ENCODE measurements at regions of chr3 and their contacts with region 1.

Region 1: DNA sequence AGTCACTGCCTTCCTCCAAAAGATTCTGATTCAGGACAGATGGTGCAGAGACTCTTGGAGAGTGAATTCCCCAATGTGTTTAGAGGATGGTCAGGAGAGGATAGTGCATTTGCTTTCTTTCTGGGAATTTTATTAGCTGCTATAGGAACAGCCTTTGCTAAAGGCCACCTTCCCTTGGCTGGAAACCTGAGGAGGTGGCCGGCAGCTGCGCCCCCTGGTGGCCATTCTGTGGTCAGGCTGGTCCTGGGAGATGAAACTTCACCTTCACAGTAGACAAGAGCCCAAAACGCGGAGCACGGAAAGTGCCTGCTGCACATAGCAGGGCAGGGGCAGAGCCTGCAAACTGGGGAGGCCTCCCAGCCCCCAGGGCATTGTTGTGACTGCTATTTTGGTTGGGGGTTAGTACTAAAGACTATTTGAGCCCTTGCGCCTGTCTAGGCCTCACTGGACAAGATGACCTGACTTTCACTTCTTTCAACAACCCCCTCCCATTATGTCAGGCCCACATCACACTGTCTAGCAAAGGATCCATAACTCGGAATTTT is 34.3 kb downstream of the SEC22C start:
- DNase-seq: peak; percentile 67
- H3K4me3 Mint-ChIP-seq: no peak overlapping the region
- H3K27ac Mint-ChIP-seq: no peak overlapping the region
- H3K4me1 Mint-ChIP-seq: peaks cover 3% of the 10 kb centered on the region
- H3K27me3 Mint-ChIP-seq: no peaks in the 10 kb centered on the region

Region 2: DNA sequence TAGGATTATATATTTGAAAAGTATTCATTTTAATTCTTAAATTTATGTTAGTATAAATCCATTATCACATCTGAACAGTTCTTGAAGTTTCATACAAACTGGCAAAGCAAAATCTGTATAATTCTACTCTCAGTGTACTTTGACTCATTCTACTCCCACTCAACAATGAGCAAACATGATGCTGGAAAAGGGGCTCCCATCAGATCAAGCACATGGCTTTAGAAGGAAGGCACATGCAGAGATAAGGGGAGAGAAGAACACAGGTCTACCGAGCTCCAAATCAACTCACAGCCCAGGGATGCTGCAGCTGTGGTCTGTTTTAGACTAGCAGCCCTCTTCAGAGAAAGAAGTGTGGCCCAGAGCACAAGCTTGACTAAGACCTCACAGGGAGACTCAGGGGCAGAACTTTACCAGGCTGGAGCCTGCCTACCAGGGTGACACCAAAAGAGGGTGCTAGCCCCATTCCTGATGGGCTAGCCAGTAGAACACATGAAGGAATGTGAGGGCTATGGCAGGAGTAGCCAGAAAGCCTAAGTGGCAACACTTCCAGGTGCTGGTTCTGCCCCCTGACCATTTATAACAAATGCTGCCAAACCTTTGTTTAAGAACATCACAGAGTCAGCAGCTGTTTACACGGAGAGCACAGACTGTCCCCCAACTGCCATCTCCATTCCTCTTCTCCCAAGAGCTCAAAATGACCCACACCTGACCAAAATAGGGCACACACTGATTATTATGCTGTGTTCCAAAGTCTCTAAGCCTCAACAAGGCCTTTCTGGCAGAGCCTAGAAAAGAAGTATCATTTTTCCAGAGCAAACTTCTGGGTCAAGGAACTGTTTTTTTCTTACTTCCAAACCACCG is 14.8 kb after region 1 on chr3:
- CTCF ChIA-PET with region 1: interaction called, 10 read pairs
- intact Hi-C with region 1: no loop called
- DNase-seq: no peak
- H3K4me3 Mint-ChIP-seq: no peak overlapping the region
- H3K27ac Mint-ChIP-seq: peak overlapping the region; percentile 8
- H3K4me1 Mint-ChIP-seq: peaks cover 18% of the 10 kb centered on the region
- H3K27me3 Mint-ChIP-seq: no peaks in the 10 kb centered on the region

Region 3: DNA sequence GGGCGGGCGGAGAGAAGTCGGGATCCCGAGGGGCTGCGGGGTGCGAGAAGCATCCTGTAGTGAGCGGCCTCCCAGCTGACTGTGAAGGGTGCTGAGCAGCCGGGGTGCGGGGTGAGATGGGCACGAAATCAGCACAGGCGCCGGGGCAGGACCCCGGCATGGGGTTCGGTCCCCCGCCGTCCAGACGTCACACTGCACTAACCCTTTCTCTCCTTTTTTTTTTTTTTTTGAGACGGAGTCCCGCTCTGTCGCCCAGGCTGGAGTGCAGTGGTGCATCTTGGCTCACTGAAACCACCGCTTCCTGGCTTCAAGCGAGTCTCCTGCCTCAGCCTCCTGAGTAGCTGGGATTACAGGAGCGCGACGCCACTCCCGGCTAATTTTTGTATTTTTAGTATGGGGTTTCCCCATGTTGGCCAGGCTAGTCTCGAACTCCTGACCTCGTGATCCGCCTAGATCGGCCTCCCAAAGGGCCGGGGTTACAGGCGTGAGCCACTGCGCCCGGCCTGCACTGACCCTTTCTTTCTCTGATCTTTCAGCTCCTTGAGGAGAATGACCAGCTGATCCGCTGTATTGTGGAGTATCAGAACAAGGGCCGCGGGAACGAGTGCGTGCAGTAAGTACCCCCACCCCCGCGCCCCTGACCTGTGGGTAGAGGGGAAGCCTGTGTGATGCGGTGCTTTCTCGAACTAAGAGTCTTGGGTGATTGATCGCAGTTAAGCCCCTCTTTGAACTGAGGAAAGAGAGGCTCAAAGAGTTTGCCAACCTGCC is 43.7 kb after region 1 on chr3:
- CTCF ChIA-PET with region 1: no interaction called
- intact Hi-C with region 1: no loop called
- DNase-seq: no peak
- H3K4me3 Mint-ChIP-seq: peak overlapping the region; percentile 96
- H3K27ac Mint-ChIP-seq: peak overlapping the region; percentile 84
- H3K4me1 Mint-ChIP-seq: peaks cover 35% of the 10 kb centered on the region
- H3K27me3 Mint-ChIP-seq: no peaks in the 10 kb centered on the region

Region 4: DNA sequence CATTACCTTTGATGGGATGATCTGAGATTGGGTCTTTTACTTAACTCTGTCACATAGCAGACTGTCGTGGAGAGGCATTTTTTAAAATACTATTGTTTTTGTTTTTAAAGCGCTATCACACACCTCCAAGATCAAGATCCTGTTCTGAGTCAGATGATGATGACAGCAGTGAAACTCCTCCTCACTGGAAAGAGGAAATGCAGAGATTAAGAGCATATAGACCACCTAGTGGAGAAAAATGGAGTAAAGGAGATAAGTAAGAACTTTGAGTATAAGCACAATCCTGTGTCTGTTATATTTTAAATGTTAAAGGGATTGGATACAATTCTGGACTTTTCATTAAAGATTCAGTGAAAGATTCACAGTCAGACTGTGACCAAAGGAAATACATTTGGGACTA is 87.6 kb after region 1 on chr3:
- CTCF ChIA-PET with region 1: no interaction called
- intact Hi-C with region 1: no loop called
- DNase-seq: no peak
- H3K4me3 Mint-ChIP-seq: no peak overlapping the region
- H3K27ac Mint-ChIP-seq: peak overlapping the region; percentile 67
- H3K4me1 Mint-ChIP-seq: peaks cover 11% of the 10 kb centered on the region
- H3K27me3 Mint-ChIP-seq: no peaks in the 10 kb centered on the region